Naive thymus-derived CD4-positive, alpha-beta T cell (primary cell): ENCODE measurements at regions of chr1 and their contacts with region 1.

Region 1: DNA sequence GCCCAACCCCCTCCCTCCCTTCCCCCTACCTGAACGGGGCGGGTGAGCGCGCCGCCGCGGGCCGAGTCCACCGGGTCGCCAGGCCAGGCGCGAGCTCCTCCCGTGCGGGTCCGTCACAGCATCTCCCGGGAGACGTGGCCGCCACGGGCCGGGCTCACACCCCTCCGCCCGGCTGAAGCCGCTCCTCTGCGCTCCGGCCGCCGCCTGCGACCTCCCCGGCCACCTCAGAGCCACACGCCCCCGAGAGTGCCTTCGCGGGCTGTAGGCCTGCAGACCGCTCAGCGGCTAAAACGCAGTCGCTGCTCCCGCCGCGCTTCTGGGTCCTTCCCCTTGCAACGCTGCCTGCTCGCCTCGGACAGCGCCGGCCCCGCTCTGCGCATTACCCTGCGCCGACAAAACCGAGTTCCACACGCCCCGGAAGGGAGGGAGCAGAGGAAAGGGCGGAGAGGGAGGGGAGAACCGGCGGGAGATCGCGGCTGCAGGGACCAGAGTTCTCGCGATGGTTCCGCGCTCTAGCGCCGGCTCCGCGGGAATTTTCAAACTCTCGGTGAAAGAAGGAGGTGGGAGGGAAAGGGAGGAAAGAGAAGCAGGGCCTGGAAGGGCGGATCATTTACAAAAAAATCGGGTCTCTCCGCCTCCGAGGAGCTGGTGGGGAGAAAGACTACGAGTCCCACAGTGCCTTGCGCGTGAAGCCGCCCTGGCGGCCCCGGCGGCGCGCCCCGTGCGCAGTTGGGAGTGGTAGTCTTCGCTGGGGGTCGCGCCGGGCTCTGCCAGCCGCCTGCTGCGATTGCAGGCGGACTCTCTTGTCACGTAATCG is at the start of gene AHCTF1:
- DNase-seq: peak; percentile 86 to 98 (median 95)
- ATAC-seq: peak; percentile 95
- H3K4me3 ChIP-seq: peak within 1 kb of the TSS; percentile 87
- H3K4me3 Mint-ChIP-seq: peak within 1 kb of the TSS; percentile 91 to 98 (median 96)
- H3K27ac ChIP-seq: peak within 1 kb of the TSS; percentile 86
- H3K27ac Mint-ChIP-seq: peak within 1 kb of the TSS; percentile 92 to 99 (median 96)
- H3K4me1 ChIP-seq: peaks cover 7 to 8% of the 10 kb centered on the region in 2 donors
- H3K4me1 Mint-ChIP-seq: peaks cover 30 to 50% (median 35%) of the 10 kb centered on the region in 7 donors
- H3K27me3 ChIP-seq: no peaks in the 10 kb centered on the region
- H3K27me3 Mint-ChIP-seq: peaks cover 0 to 4% (median 0%) of the 10 kb centered on the region in 5 donors
- total RNA-seq, gene AHCTF1: 31.8 to 66.5 (median 57.3) TPM

Region 2: GRCh38 chr1:245953876-245954660 is 977.7 kb before region 1 on chr1:
- CTCF ChIA-PET with region 1: no interaction called
- POLR2A ChIA-PET with region 1: no interaction called
- intact Hi-C with region 1: loop called (anchors 5 to 10 kb)
- DNase-seq: peak in 6 of 9 donors; percentile 17 to 49 (median 34)
- ATAC-seq: peak; percentile 45
- H3K4me3 ChIP-seq: peak overlapping the region; percentile 31
- H3K4me3 Mint-ChIP-seq: peak overlapping the region in 8 of 10 donors; percentile 56 to 90 (median 78)
- H3K27ac ChIP-seq: peak overlapping the region; percentile 76
- H3K27ac Mint-ChIP-seq: peak overlapping the region in 1 of 9 donors; percentile 97
- H3K4me1 ChIP-seq: peaks cover 25 to 27% of the 10 kb centered on the region in 2 donors
- H3K4me1 Mint-ChIP-seq: peaks cover 9 to 29% (median 19%) of the 10 kb centered on the region in 7 donors
- H3K27me3 ChIP-seq: no peaks in the 10 kb centered on the region
- H3K27me3 Mint-ChIP-seq: no peaks in the 10 kb centered on the region

Region 3: GRCh38 chr1:247078261-247079140 is 146.7 kb after region 1 on chr1 and contains the start of gene ZNF670:
- CTCF ChIA-PET with region 1: no interaction called
- POLR2A ChIA-PET with region 1: no interaction called
- intact Hi-C with region 1: loop called (anchors 1 kb)
- DNase-seq: peak; percentile 64 to 89 (median 76)
- ATAC-seq: peak; percentile 99
- H3K4me3 ChIP-seq: peak within 1 kb of the TSS; percentile 72
- H3K4me3 Mint-ChIP-seq: peak within 1 kb of the TSS; percentile 84 to 95 (median 92)
- H3K27ac ChIP-seq: peak within 1 kb of the TSS; percentile 69
- H3K27ac Mint-ChIP-seq: peak within 1 kb of the TSS; percentile 71 to 91 (median 82)
- H3K4me1 ChIP-seq: peaks cover 6 to 8% of the 10 kb centered on the region in 2 donors
- H3K4me1 Mint-ChIP-seq: peaks cover 9 to 38% (median 32%) of the 10 kb centered on the region in 7 donors
- H3K27me3 ChIP-seq: no peaks in the 10 kb centered on the region
- H3K27me3 Mint-ChIP-seq: peaks cover 0 to 12% (median 8%) of the 10 kb centered on the region in 5 donors
- total RNA-seq, gene ZNF670: 0.56 to 4.0 (median 1.1) TPM

Region 4: DNA sequence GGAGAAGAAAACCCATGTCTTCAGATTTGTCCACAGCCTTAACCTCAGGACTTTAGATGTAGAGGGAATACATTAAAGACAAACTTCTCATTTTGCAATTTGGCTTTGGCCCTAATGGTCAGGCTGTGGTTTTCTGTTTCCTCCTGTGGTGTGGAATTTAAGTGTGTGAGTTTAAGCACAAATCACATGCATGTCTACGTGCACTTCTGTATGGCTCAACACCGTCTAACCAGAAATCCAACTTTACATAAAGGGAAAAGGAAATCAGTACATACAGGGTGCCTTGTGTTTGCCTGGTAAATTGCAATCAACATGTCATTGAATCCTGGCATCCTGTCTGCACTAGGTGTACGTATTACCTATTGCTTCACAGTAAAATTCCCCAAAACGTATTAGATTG is 241.2 kb after region 1 on chr1:
- CTCF ChIA-PET with region 1: no interaction called
- POLR2A ChIA-PET with region 1: interaction called, 3 read pairs
- intact Hi-C with region 1: loop called in 1 of 2 experiments (anchors 5 kb)
- DNase-seq: no peak
- ATAC-seq: peak; percentile 1
- H3K4me3 ChIP-seq: no peak overlapping the region
- H3K4me3 Mint-ChIP-seq: peak overlapping the region in 1 of 10 donors; percentile 29
- H3K27ac ChIP-seq: no peak overlapping the region
- H3K27ac Mint-ChIP-seq: peak overlapping the region in 1 of 9 donors; percentile 59
- H3K4me1 ChIP-seq: no peaks in the 10 kb centered on the region
- H3K4me1 Mint-ChIP-seq: peaks cover 0 to 22% (median 11%) of the 10 kb centered on the region in 7 donors
- H3K27me3 ChIP-seq: no peaks in the 10 kb centered on the region
- H3K27me3 Mint-ChIP-seq: no peaks in the 10 kb centered on the region

Region 5: DNA sequence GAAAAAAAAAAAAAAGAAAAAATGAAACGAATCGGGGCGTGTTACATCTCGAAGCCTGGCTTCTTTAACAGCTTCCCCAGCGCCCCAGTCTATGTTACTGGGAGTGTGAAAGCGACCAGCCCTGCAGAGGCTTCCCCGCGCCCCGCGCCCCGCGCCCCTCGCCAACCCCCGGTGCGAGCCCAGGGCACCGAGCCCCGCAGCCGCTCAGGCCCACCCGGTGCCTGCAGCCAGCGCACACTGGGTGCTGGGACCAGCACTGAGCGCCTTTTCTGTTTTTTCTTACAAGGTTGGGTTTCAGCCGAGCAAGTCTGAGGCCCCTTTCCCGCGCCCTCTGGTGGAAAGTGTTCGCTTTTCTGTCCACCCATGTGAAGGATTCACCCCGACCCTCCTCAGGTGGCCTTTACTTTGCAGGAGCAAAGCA is 442.0 kb after region 1 on chr1:
- CTCF ChIA-PET with region 1: no interaction called
- POLR2A ChIA-PET with region 1: no interaction called
- intact Hi-C with region 1: loop called in 1 of 2 experiments (anchors 10 kb)
- DNase-seq: peak; percentile 37 to 64 (median 48)
- ATAC-seq: peak; percentile 84
- H3K4me3 ChIP-seq: peak overlapping the region; percentile 46
- H3K4me3 Mint-ChIP-seq: peak overlapping the region in 9 of 10 donors; percentile 14 to 70 (median 58)
- H3K27ac ChIP-seq: no peak overlapping the region
- H3K27ac Mint-ChIP-seq: no peak overlapping the region
- H3K4me1 ChIP-seq: no peaks in the 10 kb centered on the region
- H3K4me1 Mint-ChIP-seq: peaks cover 0 to 10% (median 7%) of the 10 kb centered on the region in 7 donors
- H3K27me3 ChIP-seq: no peaks in the 10 kb centered on the region
- H3K27me3 Mint-ChIP-seq: peaks cover 4 to 19% (median 6%) of the 10 kb centered on the region in 5 donors